CD8-positive, alpha-beta T cell (primary cell): ENCODE measurements at regions of chr12 and their contacts with region 1.

Region 1: GRCh38 chr12:52372216-52373154 is 5.2 kb upstream of the KRT85 start:
- DNase-seq: peak; percentile 31 to 75 (median 60)
- ATAC-seq: no peak
- H3K4me3 ChIP-seq: no peak overlapping the region
- H3K4me3 Mint-ChIP-seq: no peak overlapping the region
- H3K27ac ChIP-seq: no peak overlapping the region
- H3K27ac Mint-ChIP-seq: no peak overlapping the region
- H3K4me1 ChIP-seq: no peaks in the 10 kb centered on the region
- H3K4me1 Mint-ChIP-seq: no peaks in the 10 kb centered on the region
- H3K27me3 ChIP-seq: peaks cover 0 to 2% of the 10 kb centered on the region in 2 experiments
- H3K27me3 Mint-ChIP-seq: peaks cover 21% of the 10 kb centered on the region
- CTCF ChIP-seq: peak; percentile 34

Region 2: GRCh38 chr12:52358575-52359350 is 13.7 kb before region 1 on chr12:
- CTCF ChIA-PET with region 1: interaction called, 32 read pairs
- POLR2A ChIA-PET with region 1: interaction called, 4 read pairs
- intact Hi-C with region 1: no loop called
- DNase-seq: peak in 8 of 9 experiments; percentile 4 to 77 (median 41)
- ATAC-seq: peak; percentile 93
- H3K4me3 ChIP-seq: no peak overlapping the region
- H3K4me3 Mint-ChIP-seq: peak overlapping the region; percentile 2
- H3K27ac ChIP-seq: no peak overlapping the region
- H3K27ac Mint-ChIP-seq: peak overlapping the region; percentile 67
- H3K4me1 ChIP-seq: peaks cover 26% of the 10 kb centered on the region
- H3K4me1 Mint-ChIP-seq: peaks cover 31% of the 10 kb centered on the region
- H3K27me3 ChIP-seq: peaks cover 0 to 4% of the 10 kb centered on the region in 2 experiments
- H3K27me3 Mint-ChIP-seq: peaks cover 16% of the 10 kb centered on the region
- CTCF ChIP-seq: peak; percentile 33

Region 3: DNA sequence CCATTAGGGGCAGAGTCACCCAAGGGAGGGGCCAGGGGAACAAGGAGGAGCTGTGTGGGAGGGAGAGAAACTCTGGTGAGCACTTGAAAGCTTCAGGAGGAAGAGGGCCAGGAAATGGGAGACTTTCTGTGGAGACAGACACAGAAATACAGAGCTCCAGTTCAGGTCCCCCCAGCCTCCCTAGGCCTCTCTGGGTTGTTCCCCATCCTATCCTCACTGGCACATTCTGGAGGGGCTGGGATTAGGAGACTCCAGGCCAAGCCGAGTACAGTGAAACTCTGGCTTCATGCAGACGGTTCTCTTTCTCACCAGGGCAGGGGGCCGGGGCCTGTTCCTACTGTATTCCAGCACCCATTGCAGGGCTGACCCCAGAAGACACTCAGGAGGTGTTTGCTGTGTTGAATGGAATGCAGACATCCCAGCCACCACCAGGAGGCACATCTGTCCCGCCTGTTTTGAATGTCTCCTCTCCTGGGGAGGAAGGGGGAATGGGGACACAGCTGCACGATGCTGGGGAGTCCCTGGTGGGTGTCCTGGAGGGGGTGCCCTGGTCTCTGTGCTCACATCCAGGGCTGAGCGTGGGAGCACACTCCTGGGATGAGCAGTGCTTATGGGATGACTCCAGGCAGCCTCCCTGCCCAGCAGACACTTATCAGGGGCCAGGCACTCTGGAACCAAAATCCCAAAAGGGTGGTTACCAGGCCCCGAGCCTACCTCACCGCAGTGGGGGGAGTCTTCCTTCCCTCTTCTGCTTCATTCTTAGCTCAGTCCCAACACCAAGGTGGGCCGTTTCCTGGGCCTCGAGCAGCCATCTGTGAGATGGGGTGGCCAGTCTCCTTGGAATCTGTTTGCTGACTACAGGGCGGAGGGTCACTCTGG is 18.5 kb after region 1 on chr12:
- CTCF ChIA-PET with region 1: interaction called, 16 read pairs
- POLR2A ChIA-PET with region 1: no interaction called
- intact Hi-C with region 1: no loop called
- DNase-seq: peak in 2 of 9 experiments; percentile 24 to 36
- ATAC-seq: no peak
- H3K4me3 ChIP-seq: no peak overlapping the region
- H3K4me3 Mint-ChIP-seq: no peak overlapping the region
- H3K27ac ChIP-seq: no peak overlapping the region
- H3K27ac Mint-ChIP-seq: no peak overlapping the region
- H3K4me1 ChIP-seq: no peaks in the 10 kb centered on the region
- H3K4me1 Mint-ChIP-seq: no peaks in the 10 kb centered on the region
- H3K27me3 ChIP-seq: no peaks in the 10 kb centered on the region
- H3K27me3 Mint-ChIP-seq: peaks cover 8% of the 10 kb centered on the region
- CTCF ChIP-seq: no peak